Dendritic cell treated with granulocyte-macrophage colony-stimulating factor and Interleukin-4, amounts not matched to agents 40 ng/mL and 50 ng/mL, for 4 days (primary cell): ENCODE measurements at regions of chr6 and their contacts with region 1.

Region 1: DNA sequence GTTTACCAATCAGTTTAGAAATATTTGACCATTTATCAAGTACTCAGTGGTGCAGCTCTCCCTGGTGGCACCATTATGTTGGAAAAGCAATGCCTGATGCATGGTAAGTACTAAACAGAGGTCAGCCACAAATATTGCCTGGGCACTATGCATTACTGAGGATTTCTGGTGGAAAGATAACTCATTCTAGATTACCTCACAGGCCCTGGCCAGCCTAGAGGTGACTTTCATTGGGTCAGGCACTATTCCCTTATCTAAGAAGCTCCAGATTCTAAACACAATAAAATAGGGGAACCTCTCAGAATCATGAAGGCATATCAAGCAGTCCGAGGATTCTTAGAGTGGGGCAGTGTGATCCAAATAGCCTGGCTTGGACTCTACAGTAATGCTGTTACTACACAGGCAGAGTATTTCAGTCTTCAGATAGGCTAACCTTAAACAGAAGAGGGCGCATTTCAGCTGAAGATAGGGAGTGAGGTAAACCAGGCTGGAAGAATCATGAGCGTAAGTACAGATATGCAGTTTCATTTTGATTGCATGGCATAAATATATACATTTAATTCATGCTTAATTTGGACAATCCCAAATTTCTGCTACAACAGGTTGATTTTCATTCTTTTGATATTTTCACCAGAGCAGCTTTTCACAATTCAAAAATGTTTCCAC is 12.1 kb downstream of the LGSN start:
- H3K4me3 Mint-ChIP-seq: no peak overlapping the region
- H3K27ac Mint-ChIP-seq: no peak overlapping the region
- H3K4me1 Mint-ChIP-seq: no peaks in the 10 kb centered on the region
- H3K27me3 Mint-ChIP-seq: no peaks in the 10 kb centered on the region

Region 2: GRCh38 chr6:63764318-63764916 is 456.7 kb after region 1 on chr6:
- intact Hi-C with region 1: loop called (anchors 5 kb)
- H3K4me3 Mint-ChIP-seq: no peak overlapping the region
- H3K27ac Mint-ChIP-seq: no peak overlapping the region
- H3K4me1 Mint-ChIP-seq: no peaks in the 10 kb centered on the region
- H3K27me3 Mint-ChIP-seq: no peaks in the 10 kb centered on the region